AG04449 (cell line): ENCODE measurements at regions of chr1 and their contacts with region 1.

Region 1: DNA sequence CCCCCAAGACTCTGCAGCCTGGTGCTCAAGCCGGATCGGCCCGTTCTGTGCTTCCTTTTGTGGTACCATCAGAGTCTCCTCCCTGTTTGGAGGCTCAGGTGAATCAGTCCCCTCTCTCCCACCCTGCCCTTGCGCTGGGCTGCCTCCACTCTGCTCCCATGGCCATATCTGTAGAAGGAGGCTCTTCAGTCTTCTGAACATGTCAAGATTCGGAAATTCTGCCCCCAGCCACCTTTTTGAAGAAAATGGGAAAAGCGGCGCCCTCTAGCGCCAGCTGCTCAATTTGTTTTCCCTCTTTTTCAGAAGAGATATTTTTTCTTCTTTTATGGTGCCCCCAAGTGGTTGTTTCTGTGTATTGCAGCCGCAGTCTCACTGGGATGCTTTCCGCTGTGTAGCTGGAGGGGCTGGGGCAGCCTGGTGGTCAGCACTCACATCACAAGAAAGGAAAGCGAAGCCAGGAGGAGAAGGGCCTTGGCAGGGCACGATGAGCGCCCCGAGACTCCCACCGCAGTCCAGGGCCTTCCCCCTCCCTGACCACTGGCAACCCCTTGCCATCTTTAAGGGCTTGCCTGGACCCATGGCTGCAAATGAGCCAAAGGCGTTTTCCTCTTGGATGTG is 58.4 kb upstream of the CACNA1E start:
- DNase-seq: no peak
- H3K4me3 ChIP-seq: no peak overlapping the region
- CTCF ChIP-seq: peak; percentile 65

Region 2: GRCh38 chr1:181179987-181180365 is 244.9 kb before region 1 on chr1:
- CTCF ChIA-PET with region 1: interaction called, 20 read pairs
- POLR2A ChIA-PET with region 1: no interaction called
- DNase-seq: peak; percentile 24
- H3K4me3 ChIP-seq: no peak overlapping the region
- CTCF ChIP-seq: no peak

Region 3: DNA sequence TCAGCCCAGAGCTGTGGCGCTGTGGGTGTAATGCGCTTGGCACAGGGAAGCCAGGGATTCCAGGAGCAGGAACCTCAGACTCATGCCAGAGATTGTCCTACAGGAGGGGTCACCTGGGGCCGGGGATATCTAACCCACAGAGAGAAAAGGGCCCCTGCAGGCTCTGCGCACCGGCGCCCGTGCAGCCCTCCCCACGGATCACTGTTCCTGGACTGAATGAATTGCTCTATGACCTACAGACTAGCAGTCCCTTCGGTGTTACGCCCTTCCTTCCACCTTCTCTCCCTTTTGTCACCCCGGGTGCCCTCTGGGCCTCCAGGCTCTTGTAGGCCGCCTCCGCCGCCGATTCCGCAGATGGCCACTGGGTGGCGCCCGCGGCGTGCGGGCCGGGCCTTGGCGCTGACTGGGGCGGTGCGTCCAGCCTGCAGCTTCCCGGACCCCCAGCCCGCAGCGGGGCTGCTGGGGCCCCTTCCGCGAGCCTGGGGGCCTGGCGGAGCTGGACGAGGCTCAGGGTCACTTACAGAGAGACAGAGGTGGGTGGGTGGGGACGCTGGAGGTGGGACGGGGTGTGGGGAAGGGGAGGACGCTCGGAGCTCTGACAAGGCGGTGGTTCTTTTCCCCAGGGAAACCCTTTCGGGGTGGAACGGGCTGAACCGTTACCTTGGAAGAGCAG is 235.1 kb before region 1 on chr1:
- CTCF ChIA-PET with region 1: interaction called, 131 read pairs
- POLR2A ChIA-PET with region 1: no interaction called
- DNase-seq: no peak
- H3K4me3 ChIP-seq: peak overlapping the region; percentile 41
- CTCF ChIP-seq: peak; percentile 95

Region 4: DNA sequence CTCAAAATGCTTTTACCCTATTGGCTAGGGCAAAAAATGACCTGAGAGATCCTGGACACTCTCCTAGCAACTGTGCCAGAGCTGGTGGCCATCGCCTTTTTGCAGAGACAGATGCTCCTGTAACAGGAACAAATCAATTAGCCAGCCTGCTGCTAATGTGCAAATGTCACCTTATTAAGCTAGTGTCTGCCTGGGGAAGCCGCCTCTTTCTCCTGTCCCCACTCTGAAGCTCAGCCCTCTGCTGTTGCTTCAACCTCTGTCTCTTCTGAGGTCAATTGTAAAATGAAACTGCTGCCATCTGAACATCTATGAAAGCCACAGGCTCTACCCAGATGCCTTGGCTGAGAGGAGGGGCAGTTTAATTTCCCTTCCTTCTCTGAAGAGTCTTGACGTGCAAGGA is 27.1 kb before region 1 on chr1:
- CTCF ChIA-PET with region 1: interaction called, 11 read pairs
- POLR2A ChIA-PET with region 1: no interaction called
- DNase-seq: no peak
- H3K4me3 ChIP-seq: no peak overlapping the region
- CTCF ChIP-seq: no peak